ENCODE measurements at regions of chr19 and their contacts with region 1.

Region 1: DNA sequence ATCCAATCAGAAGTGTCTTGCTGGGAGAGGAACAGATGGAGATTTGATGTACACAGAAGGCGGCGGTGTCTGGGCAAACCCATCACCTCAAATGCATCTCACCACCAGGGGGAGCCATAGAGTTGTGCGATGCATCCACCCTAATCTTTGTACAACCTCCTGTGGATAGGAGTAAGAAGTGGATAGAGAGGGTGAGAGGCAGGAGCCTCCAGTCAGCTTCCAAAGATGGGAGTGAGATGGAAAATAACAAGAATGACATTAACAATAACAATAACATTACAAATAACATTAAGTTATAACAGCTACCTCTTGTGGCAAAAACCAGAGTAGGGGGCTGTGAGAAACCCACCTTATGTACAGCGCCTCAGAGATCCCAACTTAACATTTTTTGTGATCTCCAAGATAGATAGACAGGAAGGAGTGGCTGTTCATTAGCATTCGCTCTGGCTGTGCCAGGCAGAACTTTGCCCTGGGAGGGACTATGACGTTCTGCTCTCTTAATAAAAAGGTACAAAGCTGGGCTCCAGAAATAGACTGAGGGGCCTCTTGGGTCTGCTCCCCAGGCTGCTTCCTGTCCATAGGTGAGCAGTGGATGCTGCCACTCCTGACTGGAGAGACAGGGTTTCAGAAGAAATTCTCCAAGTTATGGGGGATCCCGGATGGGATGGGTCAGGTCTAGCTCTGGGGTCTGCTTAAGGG is 5.2 kb upstream of the CEACAM18 start:
- DNase-seq: peak; percentile 89
- ATAC-seq: peak; percentile 79
- H3K4me3 Mint-ChIP-seq: no peak overlapping the region
- H3K27ac Mint-ChIP-seq: no peak overlapping the region
- H3K4me1 Mint-ChIP-seq: peaks cover 10% of the 10 kb centered on the region
- H3K27me3 Mint-ChIP-seq: peaks cover 14% of the 10 kb centered on the region

Region 2: DNA sequence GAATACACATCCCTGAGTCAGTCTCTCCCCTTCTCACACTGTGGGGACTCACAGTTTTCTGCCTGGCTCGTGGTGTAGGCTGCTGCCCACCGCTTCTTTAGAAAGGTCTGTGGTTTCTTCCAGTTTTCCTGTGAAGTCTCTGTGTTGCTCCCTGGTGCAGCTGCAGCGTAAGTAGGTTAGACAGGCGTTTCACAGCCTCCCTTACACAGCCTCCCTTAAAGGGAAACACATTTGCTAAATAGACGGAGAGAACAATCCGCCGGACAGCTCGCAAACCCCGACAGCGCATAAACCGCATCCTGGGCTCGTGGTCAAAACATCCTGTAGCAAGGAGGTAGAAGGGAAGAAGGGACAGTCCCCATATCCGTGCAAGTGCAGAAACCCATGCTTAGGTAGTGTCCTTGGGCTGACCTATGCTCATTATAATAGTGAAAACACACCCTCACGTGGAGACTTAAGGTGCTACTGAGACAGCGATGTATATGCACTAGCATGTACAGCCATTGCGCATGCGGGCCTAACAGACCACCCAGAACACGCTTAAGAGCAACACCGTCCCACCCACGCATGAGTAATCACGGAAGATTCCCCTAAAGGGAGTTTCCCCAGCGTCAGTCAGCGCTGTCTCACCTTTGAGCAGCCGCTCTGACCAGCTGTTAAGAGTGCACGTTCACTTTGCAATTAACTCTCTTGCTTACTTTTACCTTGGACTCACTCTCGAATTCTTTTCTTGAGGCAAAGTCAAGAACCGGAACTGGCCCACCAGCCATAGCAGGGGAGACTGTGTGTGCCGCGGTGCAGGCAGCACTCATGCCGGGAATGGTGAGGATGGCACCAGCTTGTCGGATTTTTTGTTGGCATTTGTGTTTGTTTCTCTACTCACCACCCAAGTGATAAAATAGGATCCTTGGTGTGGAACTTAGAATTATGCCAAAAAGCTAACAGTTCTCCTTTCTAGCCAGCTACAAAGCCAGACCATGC is 31.5 kb before region 1 on chr19:
- CTCF ChIA-PET with region 1: interaction called, 11 read pairs
- POLR2A ChIA-PET with region 1: no interaction called
- DNase-seq: peak; percentile 97
- ATAC-seq: peak; percentile 92
- H3K4me3 Mint-ChIP-seq: peak overlapping the region; percentile 71
- H3K27ac Mint-ChIP-seq: peak overlapping the region; percentile 74
- H3K4me1 Mint-ChIP-seq: peaks cover 49% of the 10 kb centered on the region
- H3K27me3 Mint-ChIP-seq: peaks cover 38% of the 10 kb centered on the region

Region 3: GRCh38 chr19:51507640-51508058 is 34.5 kb after region 1 on chr19:
- CTCF ChIA-PET with region 1: interaction called, 12 read pairs
- POLR2A ChIA-PET with region 1: no interaction called
- DNase-seq: no peak
- ATAC-seq: no peak
- H3K4me3 Mint-ChIP-seq: no peak overlapping the region
- H3K27ac Mint-ChIP-seq: no peak overlapping the region
- H3K4me1 Mint-ChIP-seq: peaks cover 18% of the 10 kb centered on the region
- H3K27me3 Mint-ChIP-seq: peaks cover 6% of the 10 kb centered on the region

Region 4: DNA sequence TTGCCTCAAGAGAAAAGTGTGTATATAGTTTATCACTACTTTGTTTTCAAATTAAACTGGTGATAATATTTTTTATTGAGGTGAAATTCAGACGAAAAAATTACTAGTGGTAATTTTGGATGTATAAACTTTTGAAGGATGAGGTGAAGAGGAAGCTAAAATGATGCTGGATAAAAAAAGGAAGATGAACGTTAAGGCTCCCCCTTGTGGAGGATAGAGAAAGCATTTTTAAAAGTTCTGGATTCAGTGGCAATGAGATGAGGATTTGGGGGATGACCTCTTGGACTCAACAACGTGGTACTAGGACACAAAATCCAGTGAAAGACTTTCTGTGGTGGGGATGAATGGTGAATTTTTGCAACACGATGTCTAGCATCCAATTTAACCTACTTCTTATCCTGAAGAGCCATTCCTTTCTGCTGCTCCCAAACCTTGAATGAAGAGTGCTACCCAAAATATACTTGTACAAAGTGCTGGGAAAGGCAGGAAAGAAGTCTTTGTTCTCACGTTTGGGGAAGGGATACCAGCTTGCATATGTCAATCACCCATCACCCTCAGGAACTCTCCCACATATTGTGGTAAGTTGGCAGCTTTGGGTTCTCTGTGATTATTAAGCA is 164.3 kb after region 1 on chr19:
- CTCF ChIA-PET with region 1: interaction called, 15 read pairs
- POLR2A ChIA-PET with region 1: no interaction called
- DNase-seq: no peak
- ATAC-seq: no peak
- H3K4me3 Mint-ChIP-seq: no peak overlapping the region
- H3K27ac Mint-ChIP-seq: no peak overlapping the region
- H3K4me1 Mint-ChIP-seq: peaks cover 8% of the 10 kb centered on the region
- H3K27me3 Mint-ChIP-seq: peaks cover 26% of the 10 kb centered on the region

Region 5: GRCh38 chr19:51660975-51661600 is 187.9 kb after region 1 on chr19:
- CTCF ChIA-PET with region 1: interaction called, 52 read pairs
- POLR2A ChIA-PET with region 1: no interaction called
- DNase-seq: peak; percentile 76
- ATAC-seq: peak; percentile 61
- H3K4me3 Mint-ChIP-seq: no peak overlapping the region
- H3K27ac Mint-ChIP-seq: no peak overlapping the region
- H3K4me1 Mint-ChIP-seq: peaks cover 4% of the 10 kb centered on the region
- H3K27me3 Mint-ChIP-seq: peaks cover 19% of the 10 kb centered on the region

Measured in activated CD8-positive, alpha-beta T cell treated with anti-CD3 and anti-CD28 coated beads, Interleukin-2, amount 10 ng/mL, durations not matched to agents 7 days and 5 days (primary cell).